Gastrocnemius medialis (tissue), 4 donors: ENCODE measurements at regions of chr7 and their contacts with region 1.

Region 1: GRCh38 chr7:92567460-92567859 is 22.7 kb downstream of the FAM133B start:
- DNase-seq: no peak
- ATAC-seq: no peak
- H3K4me3 ChIP-seq: no peak overlapping the region
- H3K27ac ChIP-seq: no peak overlapping the region
- H3K4me1 ChIP-seq: no peaks in the 10 kb centered on the region
- H3K27me3 ChIP-seq: no peaks in the 10 kb centered on the region
- CTCF ChIP-seq: no peak
- POLR2A ChIP-seq: no peak

Region 2: DNA sequence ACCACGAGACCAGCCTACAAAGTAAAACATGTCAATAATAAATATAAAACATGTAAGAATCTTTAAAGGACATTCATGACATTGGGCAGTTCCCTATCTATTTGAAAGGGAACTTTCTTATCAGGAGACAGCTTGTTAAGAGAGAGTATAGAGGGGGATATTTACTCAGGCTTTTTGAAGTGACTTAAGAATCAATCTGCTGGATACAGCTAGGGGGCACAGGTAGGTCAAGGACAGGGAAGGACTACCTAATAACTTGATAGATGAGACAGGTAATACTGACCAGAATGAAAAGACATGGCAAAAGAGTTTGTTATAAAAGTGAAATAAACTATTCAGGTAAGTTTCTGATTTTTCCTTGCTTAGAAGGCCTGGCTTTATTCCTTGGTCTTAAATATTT is 366.7 kb before region 1 on chr7:
- in situ Hi-C with region 1: loop called in 1 of 4 experiments (anchors 25 kb)
- intact Hi-C with region 1: no loop called
- DNase-seq: no peak
- ATAC-seq: no peak
- H3K4me3 ChIP-seq: no peak overlapping the region
- H3K27ac ChIP-seq: no peak overlapping the region
- H3K4me1 ChIP-seq: no peaks in the 10 kb centered on the region
- H3K27me3 ChIP-seq: no peaks in the 10 kb centered on the region
- CTCF ChIP-seq: no peak
- POLR2A ChIP-seq: no peak